ENCODE measurements at regions of chr2 and their contacts with region 1.

Region 1: DNA sequence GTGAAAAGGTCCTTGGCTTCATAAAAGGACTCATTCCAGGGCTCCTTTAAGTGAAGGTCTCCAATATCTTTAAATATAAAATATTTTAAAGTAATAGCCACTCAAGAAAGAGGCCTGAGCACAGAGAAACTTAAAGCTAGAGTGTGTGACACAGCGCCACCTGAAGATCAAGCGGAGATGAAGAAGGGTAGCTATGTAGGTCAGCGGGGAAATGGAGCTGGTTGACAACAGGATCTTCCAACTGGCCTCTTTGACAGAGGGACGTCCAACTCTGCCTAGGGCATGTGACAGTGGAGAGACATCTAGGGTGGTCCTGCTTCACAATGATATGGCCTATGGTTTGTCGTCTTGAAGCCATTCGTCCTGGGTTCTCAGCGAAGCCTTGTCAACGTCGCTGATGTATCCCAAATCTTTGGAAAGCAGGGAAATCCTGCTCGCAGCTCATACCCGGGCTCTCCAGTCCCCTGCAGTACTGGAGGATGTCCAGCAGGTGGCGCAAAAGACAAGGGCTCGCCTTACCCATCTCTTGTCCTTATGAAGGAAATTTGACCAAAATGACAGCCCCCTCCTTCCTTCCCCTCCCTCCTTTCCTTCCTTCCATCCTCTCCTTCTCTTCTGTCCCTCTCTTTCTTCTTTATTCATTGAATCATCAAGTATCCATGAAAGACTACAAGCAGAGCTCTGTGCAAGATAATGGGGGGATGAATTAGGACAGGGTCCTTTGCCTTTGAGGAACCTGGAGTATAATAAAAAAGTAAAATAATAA is 59.6 kb downstream of the LONRF2 start:
- DNase-seq: no peak
- H3K4me3 ChIP-seq: no peak overlapping the region
- H3K27ac ChIP-seq: no peak overlapping the region
- H3K4me1 ChIP-seq: no peaks in the 10 kb centered on the region
- H3K27me3 ChIP-seq: no peaks in the 10 kb centered on the region
- CTCF ChIP-seq: peak; percentile 85 to 98 (median 91)
- POLR2A ChIP-seq: no peak

Region 2: GRCh38 chr2:99984799-99985515 is 277.8 kb before region 1 on chr2:
- intact Hi-C with region 1: no loop called
- DNase-seq: no peak
- H3K4me3 ChIP-seq: no peak overlapping the region
- H3K27ac ChIP-seq: no peak overlapping the region
- H3K4me1 ChIP-seq: no peaks in the 10 kb centered on the region
- H3K27me3 ChIP-seq: no peaks in the 10 kb centered on the region
- CTCF ChIP-seq: no peak
- POLR2A ChIP-seq: no peak

Region 3: GRCh38 chr2:100381240-100381639 is 118.5 kb after region 1 on chr2:
- intact Hi-C with region 1: loop called (anchors 10 kb)
- DNase-seq: peak in 1 of 2 donors; percentile 86
- H3K4me3 ChIP-seq: no peak overlapping the region
- H3K27ac ChIP-seq: no peak overlapping the region
- H3K4me1 ChIP-seq: no peaks in the 10 kb centered on the region
- H3K27me3 ChIP-seq: no peaks in the 10 kb centered on the region
- CTCF ChIP-seq: peak; percentile 58 to 78 (median 73)
- POLR2A ChIP-seq: no peak

Region 4: GRCh38 chr2:100802066-100802465 is 539.3 kb after region 1 on chr2:
- intact Hi-C with region 1: no loop called
- DNase-seq: no peak
- H3K4me3 ChIP-seq: no peak overlapping the region
- H3K27ac ChIP-seq: no peak overlapping the region
- H3K4me1 ChIP-seq: no peaks in the 10 kb centered on the region
- H3K27me3 ChIP-seq: no peaks in the 10 kb centered on the region
- CTCF ChIP-seq: no peak
- POLR2A ChIP-seq: no peak